SK-N-SH (cell line): ENCODE measurements at regions of chr10 and their contacts with region 1.

Region 1: GRCh38 chr10:84820120-84820519 is 491.7 kb downstream of the CCSER2 start:
- DNase-seq: no peak
- H3K4me3 ChIP-seq: no peak overlapping the region
- H3K27ac ChIP-seq: no peak overlapping the region
- H3K4me1 ChIP-seq: peaks cover 0 to 8% of the 10 kb centered on the region in 2 experiments; a peak in 1 of 4 replicates
- H3K27me3 ChIP-seq: no peaks in the 10 kb centered on the region
- CTCF ChIP-seq: no peak
- EP300 ChIP-seq: no peak
- RAD21 ChIP-seq: no peak

Region 2: DNA sequence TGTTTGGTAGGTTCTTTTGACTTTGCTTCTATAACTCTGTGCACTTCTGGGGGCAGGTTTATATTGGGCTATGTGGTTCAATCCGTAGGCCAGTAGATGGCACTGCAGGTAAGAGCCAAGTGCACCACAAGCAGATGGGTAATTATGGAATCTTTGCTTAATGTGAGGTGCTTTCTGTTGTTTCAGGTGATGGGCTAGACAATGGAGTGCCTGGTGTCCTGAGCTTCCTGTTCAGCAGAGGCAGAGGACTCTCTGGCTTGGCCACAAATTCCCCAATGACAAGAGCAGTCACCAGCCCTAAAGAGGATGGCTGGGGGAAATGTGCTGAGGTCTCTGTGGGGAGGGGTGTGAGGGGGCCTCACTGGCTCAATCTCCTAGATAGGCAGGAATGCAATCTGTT is 36.7 kb before region 1 on chr10:
- CTCF ChIA-PET with region 1: interaction called, 11 read pairs
- POLR2A ChIA-PET with region 1: no interaction called
- DNase-seq: peak; percentile 64
- H3K4me3 ChIP-seq: no peak overlapping the region
- H3K27ac ChIP-seq: no peak overlapping the region
- H3K4me1 ChIP-seq: peaks cover 0 to 6% of the 10 kb centered on the region in 2 experiments; a peak in 1 of 4 replicates
- H3K27me3 ChIP-seq: no peaks in the 10 kb centered on the region
- CTCF ChIP-seq: peak; percentile 38
- EP300 ChIP-seq: no peak
- RAD21 ChIP-seq: peak; percentile 86